ENCODE measurements at regions of chr13 and their contacts with region 1.

Region 1: DNA sequence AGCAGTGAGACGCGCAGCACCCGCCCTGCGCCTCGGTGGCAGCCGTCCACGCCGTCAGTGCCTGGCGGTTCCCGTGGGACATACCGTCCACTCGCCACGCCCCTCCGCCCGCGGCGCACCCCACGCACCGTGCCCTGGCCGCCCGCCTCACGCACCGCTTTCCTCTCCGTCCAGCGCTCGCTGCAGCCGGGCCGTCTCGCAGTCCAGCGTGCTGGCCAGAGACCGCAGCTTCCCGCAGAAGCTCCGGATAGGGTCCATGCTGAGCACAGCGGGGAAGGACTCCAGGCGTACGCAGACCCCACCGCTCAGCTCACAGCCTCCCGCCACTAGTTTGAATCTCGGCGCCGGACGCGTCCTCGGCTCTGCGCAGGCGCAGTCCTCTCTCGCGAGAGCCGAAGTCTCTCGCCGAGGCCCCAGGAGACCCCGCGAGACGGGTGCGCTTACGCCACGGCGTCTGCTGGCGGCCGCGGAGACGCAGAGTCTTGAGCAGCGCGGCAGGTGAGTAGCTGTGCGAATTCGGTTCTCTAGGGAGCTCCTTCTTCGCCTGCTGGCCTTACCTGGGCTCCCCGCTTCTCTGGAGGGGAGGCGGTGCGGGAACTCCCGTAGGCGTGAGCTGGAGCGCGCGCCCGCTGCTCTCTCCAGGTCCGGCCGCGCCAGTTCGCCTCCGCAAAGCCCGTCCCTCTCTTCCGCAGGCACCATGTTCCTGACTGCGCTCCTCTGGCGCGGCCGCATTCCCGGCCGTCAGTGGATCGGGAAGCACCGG is at the starts of genes MRPL57 and SKA3:
- DNase-seq: peak; percentile 91 to 96 (median 94)
- ATAC-seq: peak; percentile 97 to 98
- H3K4me3 Mint-ChIP-seq: peak within 1 kb of the TSS; percentile 90 to 100 (median 95)
- H3K27ac Mint-ChIP-seq: peak within 1 kb of the TSS; percentile 93 to 98 (median 96)
- H3K4me1 Mint-ChIP-seq: peaks cover 5 to 35% (median 25%) of the 10 kb centered on the region in 4 donors
- H3K27me3 Mint-ChIP-seq: no peaks in the 10 kb centered on the region
- polyA plus RNA-seq, gene MRPL57: 54.9 to 68.9 (median 55.9) TPM
- polyA plus RNA-seq, gene SKA3: 0.06 to 0.79 TPM in 2 of 3 donors, not detected in the other

Region 2: GRCh38 chr13:21014502-21015170 is 161.8 kb before region 1 on chr13:
- POLR2A ChIA-PET with region 1: no interaction called
- DNase-seq: no peak
- ATAC-seq: no peak
- H3K4me3 Mint-ChIP-seq: no peak overlapping the region
- H3K27ac Mint-ChIP-seq: peak overlapping the region in 1 of 10 donors; percentile 14
- H3K4me1 Mint-ChIP-seq: peaks cover 6 to 42% (median 15%) of the 10 kb centered on the region in 4 donors
- H3K27me3 Mint-ChIP-seq: no peaks in the 10 kb centered on the region

Region 3: GRCh38 chr13:21297914-21298831 is 121.8 kb after region 1 on chr13:
- POLR2A ChIA-PET with region 1: interaction called, 12 read pairs
- DNase-seq: peak; percentile 78 to 91 (median 84)
- ATAC-seq: peak; percentile 86 to 95
- H3K4me3 Mint-ChIP-seq: peak overlapping the region; percentile 82 to 95 (median 89)
- H3K27ac Mint-ChIP-seq: peak overlapping the region; percentile 35 to 95 (median 87)
- H3K4me1 Mint-ChIP-seq: peaks cover 13 to 27% (median 22%) of the 10 kb centered on the region in 4 donors
- H3K27me3 Mint-ChIP-seq: no peaks in the 10 kb centered on the region

Region 4: DNA sequence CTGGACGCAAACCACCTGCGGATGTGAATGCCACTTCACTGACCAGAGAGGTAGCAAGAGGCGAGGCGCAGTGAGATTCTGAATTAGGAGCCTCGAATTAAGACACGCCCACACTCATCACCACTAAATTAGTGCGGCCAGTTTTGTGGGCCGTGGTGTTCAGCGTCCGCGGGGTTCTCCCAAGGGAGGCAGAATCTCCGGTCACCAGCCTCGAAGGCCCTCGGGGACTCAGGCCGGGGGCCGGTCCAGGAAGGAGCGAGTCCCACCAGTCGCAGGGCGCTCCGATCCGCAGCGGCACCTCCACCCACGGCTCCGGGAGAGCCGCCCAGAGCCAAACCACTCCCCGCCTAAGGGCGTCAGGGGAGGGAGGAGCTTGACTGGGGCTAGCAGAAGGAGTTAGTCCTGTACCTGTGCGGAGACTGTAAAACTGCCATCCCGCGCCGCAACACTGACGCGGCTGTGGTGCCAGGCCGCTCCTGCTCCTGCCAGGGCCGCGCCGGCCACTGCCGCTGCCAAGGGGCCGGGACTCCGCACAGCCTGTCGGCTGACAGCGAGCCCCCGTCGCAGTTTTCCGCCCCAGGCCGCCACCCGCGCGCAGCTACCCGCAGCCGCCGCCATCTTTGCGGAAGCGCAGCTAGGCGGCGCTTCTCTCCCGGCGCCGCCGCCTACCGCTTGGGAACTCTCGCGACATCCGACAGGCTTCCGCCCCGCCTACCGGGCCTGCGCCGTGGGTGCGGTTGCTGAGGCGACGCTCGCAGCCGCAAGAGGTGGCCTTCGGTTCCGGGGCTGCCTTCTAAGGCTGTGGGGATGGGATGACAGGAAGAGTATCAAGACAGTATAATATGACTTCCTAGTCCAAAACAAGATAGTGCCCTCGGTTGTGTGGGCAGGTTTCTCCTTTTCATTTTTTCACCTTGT is 427.4 kb after region 1 on chr13 and contains the start of gene MICU2:
- POLR2A ChIA-PET with region 1: interaction called, 16 read pairs
- DNase-seq: peak; percentile 90 to 98 (median 96)
- ATAC-seq: peak; percentile 92 to 93
- H3K4me3 Mint-ChIP-seq: peak within 1 kb of the TSS; percentile 81 to 92 (median 91)
- H3K27ac Mint-ChIP-seq: peak within 1 kb of the TSS; percentile 92 to 98 (median 96)
- H3K4me1 Mint-ChIP-seq: peaks cover 23 to 52% (median 50%) of the 10 kb centered on the region in 4 donors
- H3K27me3 Mint-ChIP-seq: peaks cover 0 to 15% (median 4%) of the 10 kb centered on the region in 5 donors
- polyA plus RNA-seq, gene MICU2: 37.4 to 44.3 (median 38.7) TPM